Endothelial cell of umbilical vein (primary cell): ENCODE measurements at regions of chr9 and their contacts with region 1.

Region 1: GRCh38 chr9:6757456-6758247 is at the start of gene KDM4C:
- DNase-seq: peak; percentile 97
- H3K4me3 ChIP-seq: peak within 1 kb of the TSS; percentile 84 to 92 (median 87)
- H3K27ac ChIP-seq: peak within 1 kb of the TSS; percentile 93
- H3K4me1 ChIP-seq: peaks cover 10% of the 10 kb centered on the region
- H3K27me3 ChIP-seq: peaks cover 0 to 2% of the 10 kb centered on the region in 2 experiments
- CTCF ChIP-seq: no peak
- POLR2A ChIP-seq: peak; percentile 92
- total RNA-seq, gene KDM4C: 15.0 and 17.5 TPM in 2 replicates

Region 2: GRCh38 chr9:6703898-6704639 is 53.6 kb before region 1 on chr9:
- CTCF ChIA-PET with region 1: interaction called, 3 read pairs
- POLR2A ChIA-PET with region 1: no interaction called
- dilution Hi-C with region 1: no loop called
- intact Hi-C with region 1: loop called (anchors 5 kb)
- DNase-seq: peak; percentile 86
- H3K4me3 ChIP-seq: peak overlapping the region; percentile 21 to 61 (median 53)
- H3K27ac ChIP-seq: peak overlapping the region; percentile 16
- H3K4me1 ChIP-seq: peaks cover 5% of the 10 kb centered on the region
- H3K27me3 ChIP-seq: no peaks in the 10 kb centered on the region
- CTCF ChIP-seq: no peak
- POLR2A ChIP-seq: peak; percentile 79

Region 3: DNA sequence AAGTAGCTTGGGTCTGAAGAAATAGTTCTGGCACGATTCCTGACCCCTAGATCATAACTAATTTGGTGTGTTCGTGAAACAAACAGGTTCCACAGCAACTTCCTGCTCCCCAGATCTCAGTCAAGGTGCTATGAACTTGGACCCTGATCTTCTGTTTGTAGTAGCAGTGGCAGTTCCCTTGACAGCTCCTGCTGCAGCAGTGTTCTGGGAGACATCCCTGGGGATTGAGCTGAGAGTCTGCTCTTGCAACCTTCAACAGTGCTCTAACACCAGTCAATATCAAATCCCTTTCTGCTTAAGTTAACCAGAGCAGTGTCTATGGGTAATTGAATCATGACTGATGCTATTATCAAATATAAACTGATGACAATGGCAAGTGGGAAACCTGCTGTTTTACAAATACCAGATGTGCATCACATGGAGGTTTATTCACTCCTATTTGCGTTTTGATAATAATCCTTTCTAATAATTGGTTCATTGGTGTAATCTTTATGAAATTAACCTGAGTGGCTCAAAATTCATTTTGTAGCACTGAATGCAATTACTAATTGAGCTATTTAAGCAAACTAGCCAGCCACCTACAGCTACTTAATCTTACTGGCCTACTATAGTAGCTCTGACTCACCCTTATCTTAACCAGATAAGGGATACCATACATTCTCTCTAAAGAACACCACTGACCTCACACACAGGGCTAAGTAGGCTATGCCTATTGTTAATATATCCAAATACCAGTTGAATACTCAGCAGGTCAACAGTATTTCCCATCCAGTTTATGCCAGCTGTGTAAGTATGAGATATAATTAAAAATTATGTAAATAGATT is 22.0 kb after region 1 on chr9:
- CTCF ChIA-PET with region 1: interaction called, 6 read pairs
- POLR2A ChIA-PET with region 1: interaction called, 7 read pairs
- dilution Hi-C with region 1: no loop called
- intact Hi-C with region 1: loop called (anchors 2 kb)
- DNase-seq: peak; percentile 89
- H3K4me3 ChIP-seq: no peak overlapping the region
- H3K27ac ChIP-seq: peak overlapping the region; percentile 66
- H3K4me1 ChIP-seq: peaks cover 18% of the 10 kb centered on the region
- H3K27me3 ChIP-seq: no peaks in the 10 kb centered on the region
- CTCF ChIP-seq: no peak
- POLR2A ChIP-seq: no peak

Region 4: DNA sequence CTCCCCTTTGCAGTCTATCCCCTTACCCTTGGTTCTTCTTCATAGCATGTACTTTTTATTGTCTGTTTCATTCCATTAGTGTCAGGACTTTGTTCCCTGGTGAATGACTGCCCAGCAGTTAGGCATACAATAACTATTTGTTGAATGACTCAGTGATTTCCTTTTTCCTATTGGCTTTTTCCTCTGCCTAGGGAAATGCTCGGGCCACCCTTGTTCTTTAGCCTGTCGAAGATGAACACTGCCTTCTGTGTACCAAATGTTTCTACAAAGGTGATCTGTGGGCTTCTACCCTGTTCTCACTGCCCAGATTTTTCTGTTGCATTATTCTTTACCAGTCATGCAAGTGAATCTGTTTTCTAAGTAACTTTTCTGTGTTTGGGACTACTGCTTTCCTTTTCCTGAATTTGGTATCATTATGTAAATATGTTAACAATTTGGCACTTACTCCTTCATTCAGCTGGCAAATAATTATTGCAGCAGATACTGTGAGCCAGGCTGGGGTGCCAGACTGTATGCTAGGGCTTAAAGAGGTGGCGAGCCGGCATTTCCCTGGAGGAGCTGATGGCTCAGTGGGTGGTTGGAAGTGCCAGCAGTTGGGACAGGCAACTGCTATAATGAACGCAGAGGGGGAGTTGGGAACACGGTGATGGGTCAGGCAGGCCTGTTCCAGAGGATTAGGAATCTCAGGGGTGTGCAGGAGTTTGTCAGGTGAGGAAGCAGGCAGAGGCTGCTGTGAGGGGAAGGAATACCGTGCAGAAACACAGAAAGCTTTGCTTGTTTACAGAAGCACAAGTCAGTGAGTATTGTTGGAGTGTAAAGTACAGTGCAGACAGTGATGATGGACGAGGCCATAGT is 30.7 kb after region 1 on chr9:
- CTCF ChIA-PET with region 1: interaction called, 3 read pairs
- POLR2A ChIA-PET with region 1: no interaction called
- dilution Hi-C with region 1: no loop called
- intact Hi-C with region 1: loop called (anchors 1 kb)
- DNase-seq: peak; percentile 86
- H3K4me3 ChIP-seq: peak overlapping the region in 1 of 3 experiments; percentile 50
- H3K27ac ChIP-seq: peak overlapping the region; percentile 84
- H3K4me1 ChIP-seq: peaks cover 21% of the 10 kb centered on the region
- H3K27me3 ChIP-seq: no peaks in the 10 kb centered on the region
- CTCF ChIP-seq: no peak
- POLR2A ChIP-seq: no peak

Region 5: GRCh38 chr9:6811436-6811835 is 53.8 kb after region 1 on chr9:
- CTCF ChIA-PET with region 1: interaction called, 4 read pairs
- POLR2A ChIA-PET with region 1: no interaction called
- dilution Hi-C with region 1: no loop called
- intact Hi-C with region 1: loop called (anchors 2 kb)
- DNase-seq: peak; percentile 87
- H3K4me3 ChIP-seq: no peak overlapping the region
- H3K27ac ChIP-seq: peak overlapping the region; percentile 24
- H3K4me1 ChIP-seq: peaks cover 14% of the 10 kb centered on the region
- H3K27me3 ChIP-seq: no peaks in the 10 kb centered on the region
- CTCF ChIP-seq: no peak
- POLR2A ChIP-seq: no peak

Region 6: DNA sequence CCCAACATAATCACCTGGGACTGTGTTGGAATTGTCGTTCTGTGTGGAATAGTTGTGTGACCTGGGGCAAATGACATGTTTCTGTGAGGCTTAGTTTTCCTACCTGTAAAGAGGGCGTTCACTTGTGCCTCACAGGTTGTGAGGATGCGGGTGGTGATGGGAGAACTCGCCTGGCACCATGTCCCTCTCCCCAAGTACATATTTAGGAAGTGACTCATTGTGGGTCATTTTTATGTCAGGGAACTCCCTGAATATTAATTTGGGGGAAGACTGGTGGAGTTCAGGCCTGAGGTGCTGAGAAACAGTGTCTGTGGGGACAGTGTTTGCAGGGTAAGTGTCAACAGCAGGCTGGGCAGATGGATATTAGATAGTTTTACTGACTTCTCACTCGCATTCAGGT is 144.8 kb after region 1 on chr9:
- CTCF ChIA-PET with region 1: no interaction called
- POLR2A ChIA-PET with region 1: no interaction called
- dilution Hi-C with region 1: no loop called
- intact Hi-C with region 1: loop called (anchors 5 kb)
- DNase-seq: peak; percentile 30
- H3K4me3 ChIP-seq: no peak overlapping the region
- H3K27ac ChIP-seq: peak overlapping the region; percentile 32
- H3K4me1 ChIP-seq: peaks cover 8% of the 10 kb centered on the region
- H3K27me3 ChIP-seq: no peaks in the 10 kb centered on the region
- CTCF ChIP-seq: no peak
- POLR2A ChIP-seq: no peak

Region 7: DNA sequence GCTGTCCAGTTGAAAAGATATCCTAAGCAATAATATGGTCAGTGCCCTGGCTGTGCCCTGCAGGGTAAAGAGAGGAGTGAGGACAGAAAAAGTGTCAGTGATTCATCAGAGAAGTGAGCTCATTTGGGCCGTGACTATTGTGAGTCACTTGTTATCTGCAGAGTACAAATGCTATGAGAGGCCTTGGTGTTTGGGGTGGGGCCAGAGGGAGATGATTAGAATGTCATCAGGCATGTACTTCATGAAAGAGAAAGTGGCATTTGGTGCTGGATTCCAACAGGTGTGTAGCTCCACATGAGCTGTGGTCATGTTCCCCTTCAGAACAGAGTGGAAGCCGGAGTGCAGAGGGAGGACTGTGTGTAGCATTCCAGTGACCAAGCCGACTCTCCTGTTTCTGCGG is 174.3 kb after region 1 on chr9:
- CTCF ChIA-PET with region 1: no interaction called
- POLR2A ChIA-PET with region 1: no interaction called
- dilution Hi-C with region 1: no loop called
- intact Hi-C with region 1: no loop called
- DNase-seq: no peak
- H3K4me3 ChIP-seq: no peak overlapping the region
- H3K27ac ChIP-seq: no peak overlapping the region
- H3K4me1 ChIP-seq: peaks cover 3% of the 10 kb centered on the region
- H3K27me3 ChIP-seq: no peaks in the 10 kb centered on the region
- CTCF ChIP-seq: no peak
- POLR2A ChIP-seq: no peak